Prostate gland (tissue), 2 donors: ENCODE measurements at regions of chr19 and their contacts with region 1.

Region 1: GRCh38 chr19:2782936-2783780 is at the start of gene SGTA:
- DNase-seq: peak; percentile 96
- H3K4me3 ChIP-seq: peak within 1 kb of the TSS; percentile 84 to 97
- H3K27ac ChIP-seq: peak within 1 kb of the TSS; percentile 85 to 87
- H3K4me1 ChIP-seq: peaks cover 5% of the 10 kb centered on the region
- H3K27me3 ChIP-seq: no peaks in the 10 kb centered on the region
- CTCF ChIP-seq: peak in 3 of 4 experiments; percentile 21 to 76 (median 67)
- POLR2A ChIP-seq: peak; percentile 79
- total RNA-seq, gene SGTA: 72.4 to 87.9 TPM

Region 2: GRCh38 chr19:2840794-2841790 is 57.9 kb after region 1 on chr19 and contains the start of gene ZNF555:
- intact Hi-C with region 1: loop called (anchors 5 kb)
- DNase-seq: peak; percentile 100
- H3K4me3 ChIP-seq: peak within 1 kb of the TSS; percentile 88 to 95
- H3K27ac ChIP-seq: peak within 1 kb of the TSS; percentile 84 to 91
- H3K4me1 ChIP-seq: no peaks in the 10 kb centered on the region
- H3K27me3 ChIP-seq: no peaks in the 10 kb centered on the region
- CTCF ChIP-seq: peak; percentile 58 to 84 (median 70)
- POLR2A ChIP-seq: peak; percentile 46
- total RNA-seq, gene ZNF555: 5.0 to 6.9 TPM

Region 3: GRCh38 chr19:3035542-3036118 is 252.5 kb after region 1 on chr19:
- intact Hi-C with region 1: loop called (anchors 10 kb)
- DNase-seq: peak; percentile 100
- H3K4me3 ChIP-seq: peak overlapping the region; percentile 30 to 44
- H3K27ac ChIP-seq: peak overlapping the region; percentile 82 to 94
- H3K4me1 ChIP-seq: peaks cover 8% of the 10 kb centered on the region
- H3K27me3 ChIP-seq: no peaks in the 10 kb centered on the region
- CTCF ChIP-seq: peak in 2 of 4 experiments; percentile 21 to 47
- POLR2A ChIP-seq: peak; percentile 78